ENCODE measurements at regions of chr20 and their contacts with region 1.

Region 1: DNA sequence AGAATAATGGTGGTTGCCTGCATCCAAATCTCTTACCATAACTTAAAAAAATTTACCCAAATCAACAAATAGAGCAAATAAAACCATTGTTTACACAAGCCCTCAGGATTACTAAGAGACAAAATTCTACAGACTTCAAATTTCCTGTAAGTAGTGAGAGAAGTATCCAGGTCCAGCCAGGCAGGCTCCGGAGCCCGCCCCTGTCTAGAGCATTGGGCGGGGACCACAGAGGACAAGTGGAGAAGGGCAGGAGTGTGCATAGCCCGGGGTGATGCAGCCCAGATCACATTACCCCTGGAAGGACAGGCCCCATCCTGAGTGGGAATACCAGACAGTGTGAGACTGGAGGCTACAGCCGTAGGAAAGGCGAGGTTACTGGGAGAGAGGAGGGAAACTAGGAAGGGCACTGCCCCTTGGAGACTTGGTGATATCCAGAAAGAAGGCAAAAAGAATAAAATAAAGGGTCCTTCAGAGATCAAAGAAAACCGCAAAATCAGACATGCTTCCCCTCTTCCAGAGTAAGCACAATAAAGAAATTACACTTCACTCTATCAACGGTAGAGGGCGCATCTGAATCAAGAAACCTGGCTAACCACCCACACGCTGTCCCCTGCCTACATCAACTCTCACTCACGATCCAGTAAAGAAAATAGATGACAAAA is 26.6 kb downstream of the RIN2 start:
- DNase-seq: peak; percentile 68 to 92
- ATAC-seq: peak; percentile 94 to 95
- H3K4me3 ChIP-seq: no peak overlapping the region
- H3K27ac ChIP-seq: peak overlapping the region; percentile 87 to 89
- H3K4me1 ChIP-seq: peaks cover 35% of the 10 kb centered on the region
- CTCF ChIP-seq: peak; percentile 97
- EP300 ChIP-seq: no peak; a peak in 1 of 5 replicates
- POLR2A ChIP-seq: peak; percentile 21; the same call in 1 of the 2 replicates
- RAD21 ChIP-seq: peak; percentile 97 to 99

Region 2: GRCh38 chr20:19652591-19653026 is 132.0 kb before region 1 on chr20:
- CTCF ChIA-PET with region 1: no interaction called
- POLR2A ChIA-PET with region 1: no interaction called
- DNase-seq: no peak
- ATAC-seq: no peak
- H3K4me3 ChIP-seq: no peak overlapping the region
- H3K27ac ChIP-seq: no peak overlapping the region
- H3K4me1 ChIP-seq: no peaks in the 10 kb centered on the region
- CTCF ChIP-seq: no peak
- EP300 ChIP-seq: no peak
- POLR2A ChIP-seq: no peak
- RAD21 ChIP-seq: no peak

Region 3: DNA sequence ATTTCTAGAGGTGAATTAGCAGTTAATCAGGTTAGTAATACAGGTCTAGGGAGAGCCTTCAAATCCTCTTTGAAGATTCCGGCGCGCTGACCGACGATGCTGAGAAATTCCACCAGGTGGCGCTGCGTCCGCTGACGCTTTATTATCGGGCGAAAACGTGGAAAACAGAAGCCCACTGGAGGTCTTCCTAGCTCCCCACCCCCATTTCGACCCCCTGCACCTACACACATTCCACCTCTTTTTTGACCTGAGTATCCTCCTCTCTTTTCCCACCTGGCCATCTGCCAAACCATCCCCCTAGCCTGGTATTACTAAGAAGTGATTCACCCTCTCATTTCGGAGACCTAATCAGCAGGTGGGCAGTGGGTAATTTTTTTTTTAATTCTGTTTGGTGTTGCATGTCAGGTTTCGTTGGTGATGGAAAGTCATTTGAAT is 91.9 kb before region 1 on chr20:
- CTCF ChIA-PET with region 1: interaction called, 16 read pairs
- POLR2A ChIA-PET with region 1: no interaction called
- DNase-seq: peak; percentile 61 to 71
- ATAC-seq: peak in 1 of 2 experiments; percentile 67; a peak in 3 of 6 replicates
- H3K4me3 ChIP-seq: peak overlapping the region; percentile 10; the same call in 1 of the 3 replicates
- H3K27ac ChIP-seq: peak overlapping the region; percentile 37 to 79
- H3K4me1 ChIP-seq: peaks cover 25% of the 10 kb centered on the region
- CTCF ChIP-seq: peak; percentile 98
- EP300 ChIP-seq: no peak
- POLR2A ChIP-seq: no peak
- RAD21 ChIP-seq: peak; percentile 92

Region 4: DNA sequence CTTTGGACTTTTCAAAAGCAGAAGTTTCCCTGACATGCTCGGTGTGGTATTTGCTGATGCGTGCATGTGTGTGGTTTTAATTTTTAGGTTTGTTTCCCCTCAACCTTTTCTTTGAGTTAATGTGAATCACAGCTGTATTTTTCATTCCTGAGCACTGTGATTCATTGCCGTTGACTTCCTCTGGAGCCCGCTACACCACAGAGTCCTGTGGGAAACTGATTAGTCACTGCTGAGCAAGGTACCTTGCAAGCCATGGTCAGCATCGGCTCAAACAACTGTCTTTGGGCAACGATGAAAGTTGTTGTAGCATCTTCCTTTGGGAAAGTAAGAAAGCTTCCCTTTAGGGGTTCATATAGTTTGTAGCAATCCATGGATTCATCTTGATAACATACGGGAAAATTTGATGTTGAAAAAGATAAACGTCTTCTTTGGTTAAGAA is 30.9 kb after region 1 on chr20:
- CTCF ChIA-PET with region 1: interaction called, 59 read pairs
- POLR2A ChIA-PET with region 1: interaction called, 3 read pairs
- DNase-seq: peak; percentile 95 to 96
- ATAC-seq: peak; percentile 99 to 100
- H3K4me3 ChIP-seq: no peak overlapping the region
- H3K27ac ChIP-seq: peak overlapping the region; percentile 80 to 89
- H3K4me1 ChIP-seq: peaks cover 40% of the 10 kb centered on the region
- CTCF ChIP-seq: peak; percentile 14; the same call in 2 of the 3 replicates
- EP300 ChIP-seq: peak; percentile 75 to 89; a peak in 3 of 5 replicates
- POLR2A ChIP-seq: no peak
- RAD21 ChIP-seq: peak; percentile 57 to 75

Region 5: GRCh38 chr20:19880256-19881079 is 95.8 kb after region 1 on chr20:
- CTCF ChIA-PET with region 1: interaction called, 130 read pairs
- POLR2A ChIA-PET with region 1: interaction called, 23 read pairs
- DNase-seq: peak; percentile 88 to 97
- ATAC-seq: peak; percentile 83 to 87
- H3K4me3 ChIP-seq: no peak overlapping the region
- H3K27ac ChIP-seq: peak overlapping the region; percentile 92 to 97
- H3K4me1 ChIP-seq: peaks cover 71% of the 10 kb centered on the region
- CTCF ChIP-seq: no peak
- EP300 ChIP-seq: peak; percentile 52 to 72; a peak in 3 of 5 replicates
- POLR2A ChIP-seq: no peak
- RAD21 ChIP-seq: peak in 1 of 2 experiments; percentile 8; a peak in 2 of 5 replicates

Region 6: GRCh38 chr20:19986419-19986818 is 201.8 kb after region 1 on chr20:
- CTCF ChIA-PET with region 1: interaction called, 32 read pairs
- POLR2A ChIA-PET with region 1: no interaction called
- DNase-seq: peak; percentile 45 to 57
- ATAC-seq: peak in 1 of 2 experiments; percentile 54; a peak in 2 of 6 replicates
- H3K4me3 ChIP-seq: no peak overlapping the region
- H3K27ac ChIP-seq: peak overlapping the region; percentile 63 to 86
- H3K4me1 ChIP-seq: peaks cover 58% of the 10 kb centered on the region
- CTCF ChIP-seq: no peak
- EP300 ChIP-seq: no peak
- POLR2A ChIP-seq: no peak
- RAD21 ChIP-seq: no peak

Region 7: DNA sequence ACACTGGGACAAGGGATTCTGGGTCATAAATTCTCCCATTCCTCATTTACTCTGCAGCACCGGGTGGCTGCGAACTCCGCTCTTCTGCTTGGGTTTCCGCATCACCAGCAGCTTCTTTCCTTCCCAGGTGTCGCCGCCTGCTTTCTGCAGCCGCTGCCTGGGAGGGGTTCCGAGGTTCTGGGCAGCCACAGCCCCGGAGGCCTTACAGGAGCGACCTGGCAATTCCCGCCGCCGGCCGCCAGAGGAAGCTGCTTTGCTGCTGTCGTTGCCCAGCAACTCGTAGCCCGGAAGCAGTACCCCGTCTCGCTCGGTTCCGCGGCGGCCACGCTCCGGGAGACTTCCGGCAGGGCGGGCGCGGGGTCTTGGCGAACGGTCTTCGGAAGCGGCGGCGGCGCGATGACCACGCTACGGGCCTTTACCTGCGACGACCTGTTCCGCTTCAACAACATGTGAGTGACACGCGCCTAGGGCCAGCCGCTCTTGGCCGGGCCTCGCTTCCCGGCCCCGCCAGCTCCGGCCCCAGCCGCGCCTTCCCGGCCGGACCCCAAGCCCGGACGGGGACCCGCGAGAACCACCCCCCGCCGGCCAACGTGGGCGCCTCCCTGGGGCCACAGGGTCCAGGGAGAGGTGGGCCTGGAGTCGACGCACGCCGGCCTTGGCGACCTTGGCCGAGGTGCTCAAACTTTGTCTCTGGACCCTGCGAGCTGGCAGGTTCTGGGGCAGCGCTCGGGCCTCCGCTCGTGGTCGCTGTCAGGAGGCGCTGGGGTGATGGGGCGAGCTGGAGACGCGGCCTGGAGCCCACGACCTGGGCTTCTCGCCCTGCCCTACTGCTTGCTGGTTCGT is 232.6 kb after region 1 on chr20 and contains the start of gene NAA20:
- CTCF ChIA-PET with region 1: interaction called, 21 read pairs
- POLR2A ChIA-PET with region 1: interaction called, 4 read pairs
- DNase-seq: peak; percentile 98
- ATAC-seq: peak; percentile 99
- H3K4me3 ChIP-seq: peak within 1 kb of the TSS; percentile 95
- H3K27ac ChIP-seq: peak within 1 kb of the TSS; percentile 93 to 94
- H3K4me1 ChIP-seq: peaks cover 22% of the 10 kb centered on the region
- CTCF ChIP-seq: peak; percentile 59
- EP300 ChIP-seq: no peak
- POLR2A ChIP-seq: peak; percentile 62
- RAD21 ChIP-seq: peak; percentile 59 to 66
- polyA plus RNA-seq, gene NAA20: 154 and 219 TPM in 2 replicates

Region 8: DNA sequence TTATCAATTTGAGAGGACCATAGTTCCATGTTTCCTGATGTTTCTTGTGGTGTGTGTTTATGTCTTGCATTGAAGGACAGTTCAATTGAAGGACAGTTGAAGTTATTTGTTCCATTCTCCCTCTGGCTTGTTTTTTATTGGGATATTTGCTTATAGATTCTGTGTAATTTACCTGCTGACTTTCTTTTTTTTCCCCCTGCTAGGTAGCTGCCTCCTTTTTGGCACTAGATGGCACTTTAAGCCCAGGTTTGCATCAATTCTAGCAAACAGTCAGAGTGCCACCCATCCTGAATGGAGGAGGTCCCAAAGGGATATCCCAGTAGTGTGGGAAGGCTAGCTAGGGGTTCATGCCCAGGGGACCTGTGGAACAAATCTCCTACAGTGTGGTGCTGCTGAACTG is 345.8 kb after region 1 on chr20:
- CTCF ChIA-PET with region 1: no interaction called
- POLR2A ChIA-PET with region 1: no interaction called
- DNase-seq: peak in 1 of 2 experiments; percentile 48
- ATAC-seq: peak in 1 of 2 experiments; percentile 56; a peak in 3 of 6 replicates
- H3K4me3 ChIP-seq: no peak overlapping the region
- H3K27ac ChIP-seq: no peak overlapping the region
- H3K4me1 ChIP-seq: no peaks in the 10 kb centered on the region
- CTCF ChIP-seq: 0 out of 3 replicates have a peak, but pooled peaks have one; percentile 20
- EP300 ChIP-seq: no peak
- POLR2A ChIP-seq: no peak
- RAD21 ChIP-seq: peak in 1 of 2 experiments; percentile 71; a peak in 3 of 5 replicates

Region 9: GRCh38 chr20:20188647-20189046 is 404.0 kb after region 1 on chr20:
- CTCF ChIA-PET with region 1: no interaction called
- POLR2A ChIA-PET with region 1: no interaction called
- DNase-seq: no peak
- ATAC-seq: no peak
- H3K4me3 ChIP-seq: no peak overlapping the region
- H3K27ac ChIP-seq: no peak overlapping the region
- H3K4me1 ChIP-seq: no peaks in the 10 kb centered on the region
- CTCF ChIP-seq: no peak
- EP300 ChIP-seq: no peak
- POLR2A ChIP-seq: no peak
- RAD21 ChIP-seq: no peak

Measured in A549 (cell line).